ENCODE measurements at regions of chr12 and their contacts with region 1.

Region 1: DNA sequence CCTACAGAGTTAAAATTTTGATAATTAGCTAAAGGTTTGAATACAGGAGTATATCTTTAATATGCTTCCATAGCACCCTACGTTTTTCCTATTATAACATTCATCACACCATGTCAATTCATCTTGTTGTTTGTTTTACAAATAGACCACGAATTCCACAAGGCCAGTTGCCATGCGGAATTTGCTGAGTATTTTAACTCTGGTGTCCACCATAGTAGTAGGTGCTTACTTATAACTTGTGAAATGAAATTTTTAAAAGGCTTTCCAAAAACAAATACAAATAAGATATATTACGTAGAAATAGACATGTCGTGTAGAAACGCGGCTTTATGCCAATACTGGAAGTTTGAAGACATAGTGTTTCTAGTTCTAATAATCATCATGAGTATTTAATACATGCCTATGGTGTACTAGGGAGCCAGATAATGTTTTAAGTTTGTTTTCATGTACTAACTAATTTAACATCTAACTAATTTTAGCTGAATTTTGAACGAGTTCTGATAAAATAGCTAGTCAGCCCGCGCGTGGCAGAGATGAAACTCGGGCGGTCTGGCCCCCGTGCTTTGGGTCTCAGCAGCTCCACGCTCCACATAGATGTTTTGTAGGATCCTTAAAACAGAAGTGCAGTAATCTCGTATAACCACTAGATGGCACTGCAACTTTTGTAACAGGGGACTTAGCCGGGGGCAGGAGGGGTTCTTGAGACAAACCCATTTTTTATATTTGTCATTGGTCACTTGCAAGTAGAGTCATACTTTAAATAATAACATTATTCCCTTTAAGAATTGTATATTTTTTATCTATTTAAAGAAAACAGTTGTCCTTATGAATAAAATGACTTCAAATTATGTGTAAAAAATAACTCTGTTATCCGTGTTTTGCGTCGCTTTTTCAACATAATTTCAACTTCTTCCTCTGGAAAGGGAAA is 10.2 kb downstream of the CD69 start:
- DNase-seq: peak; percentile 65

Region 2: GRCh38 chr12:9760699-9761418 is 10.3 kb after region 1 on chr12 and contains the start of gene CD69:
- CTCF ChIA-PET with region 1: interaction called, 10 read pairs
- POLR2A ChIA-PET with region 1: no interaction called
- DNase-seq: no peak

Region 3: DNA sequence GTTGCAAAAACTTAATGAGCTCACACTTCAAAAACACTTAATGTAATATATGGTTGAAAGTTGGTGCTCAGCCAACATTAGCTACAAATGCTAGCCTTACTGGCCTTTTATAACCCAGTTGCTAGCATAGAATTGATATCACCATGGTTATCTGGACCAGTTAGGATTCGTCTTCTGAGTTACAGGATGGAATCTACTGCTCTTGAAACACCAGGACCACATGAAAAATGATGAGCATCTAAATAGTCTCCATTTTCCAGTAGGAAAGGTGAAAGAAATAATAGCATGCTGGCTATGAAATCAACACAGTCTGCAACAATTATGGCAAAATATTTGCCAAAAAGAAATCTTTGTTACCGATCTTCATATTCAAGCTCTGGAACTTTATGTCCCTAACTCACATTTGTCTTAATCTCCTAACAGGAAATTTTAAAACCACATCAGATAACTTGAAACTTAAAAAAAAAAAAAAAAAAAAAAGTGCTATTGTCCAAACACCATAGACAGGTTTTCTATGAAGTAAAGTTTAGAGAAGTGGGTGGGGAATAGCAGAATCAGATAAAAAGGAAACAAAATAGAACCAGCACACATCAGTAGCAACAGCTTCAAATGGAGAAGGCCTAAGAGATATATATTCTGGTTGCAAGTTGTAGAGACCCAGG is 22.8 kb after region 1 on chr12:
- CTCF ChIA-PET with region 1: interaction called, 14 read pairs
- POLR2A ChIA-PET with region 1: no interaction called
- DNase-seq: no peak

Region 4: DNA sequence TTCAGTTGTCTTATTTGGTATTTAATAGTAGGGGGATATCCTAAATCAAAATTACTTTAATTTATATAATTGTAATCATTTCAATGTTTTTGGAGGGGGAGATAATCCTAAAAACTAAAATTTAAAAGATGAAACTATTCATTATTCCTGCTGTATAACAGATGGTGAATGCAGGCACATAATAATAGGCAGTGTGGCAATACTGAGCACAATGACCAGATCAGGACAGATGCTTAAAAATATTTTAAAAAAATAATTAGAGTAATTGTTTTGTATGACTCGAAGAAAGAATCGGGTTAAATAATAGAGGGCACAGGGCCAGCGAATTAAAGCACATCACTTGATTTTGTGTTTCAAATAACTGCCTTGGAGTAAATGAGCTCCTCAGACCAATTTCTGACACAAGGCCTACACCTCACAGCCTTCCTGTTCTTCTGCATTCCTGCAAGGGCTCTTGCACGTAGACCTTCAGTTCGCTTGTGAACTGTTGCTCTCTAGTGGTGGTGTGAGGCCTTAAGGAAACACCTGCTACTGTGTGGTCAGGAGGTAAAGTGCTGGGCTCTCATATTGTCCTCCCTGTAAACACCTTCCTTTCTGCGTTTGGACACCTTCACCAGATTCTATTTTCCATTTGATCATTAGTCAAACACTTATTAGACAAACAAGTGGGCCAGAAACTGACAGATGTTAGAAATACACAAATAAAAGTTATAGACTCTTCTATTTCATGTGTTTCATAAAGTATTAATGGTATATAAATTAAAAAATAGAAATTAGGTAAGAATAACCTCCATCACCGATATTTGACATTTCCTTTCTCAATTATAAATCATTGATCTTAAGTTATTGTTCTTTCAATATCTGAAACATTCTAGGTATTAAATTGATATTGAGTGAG is 47.4 kb after region 1 on chr12:
- CTCF ChIA-PET with region 1: interaction called, 17 read pairs
- POLR2A ChIA-PET with region 1: no interaction called
- DNase-seq: peak; percentile 37